ENCODE measurements at regions of chr7 and their contacts with region 1.

Region 1: GRCh38 chr7:40604601-40605438 is 470.0 kb downstream of the SUGCT start:
- H3K4me3 Mint-ChIP-seq: no peak overlapping the region
- H3K27ac Mint-ChIP-seq: no peak overlapping the region
- H3K4me1 Mint-ChIP-seq: peaks cover 7% of the 10 kb centered on the region
- H3K27me3 Mint-ChIP-seq: no peaks in the 10 kb centered on the region

Region 2: DNA sequence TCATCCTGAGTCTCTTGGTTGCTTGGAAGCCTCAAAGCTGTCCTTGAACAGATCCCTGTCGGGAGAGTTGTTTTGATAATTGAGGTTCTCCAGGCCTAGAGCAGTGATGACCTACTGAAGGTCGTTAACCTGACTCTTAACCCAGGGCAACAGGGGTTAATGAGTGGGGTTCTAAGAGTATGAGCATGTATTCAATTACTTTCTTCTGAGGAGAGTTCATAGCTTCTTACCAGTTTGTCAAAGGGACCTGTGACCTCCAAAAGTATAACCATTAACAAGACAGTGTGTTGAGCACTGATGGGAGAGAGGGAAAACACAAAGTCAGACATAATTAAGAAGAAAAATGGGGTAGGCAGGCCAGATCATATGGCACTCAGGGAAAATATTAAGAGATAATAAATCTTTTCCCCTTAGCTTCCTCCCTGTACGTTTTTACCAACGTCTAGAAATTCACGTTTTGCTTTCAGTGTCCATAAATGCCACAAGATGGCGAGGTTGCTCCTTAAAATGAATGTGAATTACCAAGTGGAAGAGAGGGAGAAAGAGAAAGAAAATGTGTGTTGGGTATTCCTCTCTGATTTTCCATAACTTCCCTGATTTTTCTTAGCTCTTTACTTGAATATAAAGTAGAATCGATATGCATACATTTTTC is 372.5 kb before region 1 on chr7:
- intact Hi-C with region 1: loop called (anchors 2 kb)
- H3K4me3 Mint-ChIP-seq: no peak overlapping the region
- H3K27ac Mint-ChIP-seq: no peak overlapping the region
- H3K4me1 Mint-ChIP-seq: peaks cover 13% of the 10 kb centered on the region
- H3K27me3 Mint-ChIP-seq: no peaks in the 10 kb centered on the region

Region 3: GRCh38 chr7:40329601-40330153 is 275.1 kb before region 1 on chr7:
- intact Hi-C with region 1: loop called (anchors 1 kb)
- H3K4me3 Mint-ChIP-seq: no peak overlapping the region
- H3K27ac Mint-ChIP-seq: no peak overlapping the region
- H3K4me1 Mint-ChIP-seq: no peaks in the 10 kb centered on the region
- H3K27me3 Mint-ChIP-seq: no peaks in the 10 kb centered on the region

Region 4: DNA sequence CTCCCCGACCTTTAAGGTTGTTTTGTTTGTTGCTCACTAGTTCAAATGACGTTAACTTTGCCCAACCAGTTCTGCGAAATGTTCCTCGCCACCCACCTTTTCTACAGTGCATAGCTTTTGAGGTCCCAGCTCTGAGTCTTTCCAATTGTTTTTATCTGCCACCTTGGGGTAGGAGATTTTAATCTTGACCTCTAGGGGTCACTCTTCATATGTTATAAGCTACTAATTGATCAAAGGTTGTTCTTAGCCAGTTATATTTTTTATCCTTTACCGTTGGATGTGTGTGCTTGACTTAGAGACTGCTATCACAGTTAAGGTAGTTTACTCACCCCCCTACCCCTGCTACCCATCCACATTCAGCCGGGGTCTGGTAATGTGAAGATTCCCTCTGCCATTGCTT is 97.7 kb before region 1 on chr7:
- intact Hi-C with region 1: loop called (anchors 2 kb)
- H3K4me3 Mint-ChIP-seq: no peak overlapping the region
- H3K27ac Mint-ChIP-seq: no peak overlapping the region
- H3K4me1 Mint-ChIP-seq: no peaks in the 10 kb centered on the region
- H3K27me3 Mint-ChIP-seq: no peaks in the 10 kb centered on the region